Activated naive CD4-positive, alpha-beta T cell treated with anti-CD3 and anti-CD28 coated beads for 36 hours (primary cell): ENCODE measurements at regions of chr10 and their contacts with region 1.

Region 1: GRCh38 chr10:31318854-31319601 is at the start of gene ZEB1:
- DNase-seq: peak; percentile 96
- H3K4me3 Mint-ChIP-seq: peak within 1 kb of the TSS; percentile 98
- H3K27ac Mint-ChIP-seq: peak within 1 kb of the TSS; percentile 99
- H3K4me1 Mint-ChIP-seq: peaks cover 33% of the 10 kb centered on the region
- H3K27me3 Mint-ChIP-seq: no peaks in the 10 kb centered on the region
- total RNA-seq, gene ZEB1: 24.8 to 29.1 TPM

Region 2: DNA sequence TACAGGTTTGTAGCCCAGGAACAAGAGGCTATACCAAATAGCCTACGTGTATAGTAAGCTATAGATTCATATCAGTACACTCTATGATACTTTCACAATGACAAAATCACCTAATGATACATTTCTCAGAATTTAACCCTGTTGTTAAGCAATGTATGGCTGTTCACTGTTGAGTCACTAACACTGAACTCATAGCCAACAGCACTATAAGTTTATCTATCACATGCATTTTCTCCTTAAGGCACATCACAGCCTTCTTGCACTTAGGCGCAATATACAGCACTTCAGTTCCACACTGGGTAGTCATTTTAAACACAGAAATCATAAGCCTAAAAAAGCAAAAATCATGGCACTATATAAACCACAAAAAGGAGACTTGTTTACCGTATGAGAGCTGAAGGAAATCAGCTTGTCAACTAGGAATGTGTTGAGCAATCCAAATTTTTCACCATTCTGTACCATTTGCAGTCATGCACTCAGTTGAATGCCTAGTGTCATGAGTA is 332.9 kb before region 1 on chr10:
- CTCF ChIA-PET with region 1: no interaction called
- intact Hi-C with region 1: loop called (anchors 5 kb)
- DNase-seq: no peak
- H3K4me3 Mint-ChIP-seq: no peak overlapping the region
- H3K27ac Mint-ChIP-seq: peak overlapping the region; percentile 55
- H3K4me1 Mint-ChIP-seq: peaks cover 12% of the 10 kb centered on the region
- H3K27me3 Mint-ChIP-seq: no peaks in the 10 kb centered on the region

Region 3: GRCh38 chr10:31101123-31101522 is 217.9 kb before region 1 on chr10:
- CTCF ChIA-PET with region 1: no interaction called
- intact Hi-C with region 1: loop called (anchors 1 kb)
- DNase-seq: peak; percentile 91
- H3K4me3 Mint-ChIP-seq: peak overlapping the region; percentile 50
- H3K27ac Mint-ChIP-seq: peak overlapping the region; percentile 85
- H3K4me1 Mint-ChIP-seq: peaks cover 44% of the 10 kb centered on the region
- H3K27me3 Mint-ChIP-seq: no peaks in the 10 kb centered on the region

Region 4: DNA sequence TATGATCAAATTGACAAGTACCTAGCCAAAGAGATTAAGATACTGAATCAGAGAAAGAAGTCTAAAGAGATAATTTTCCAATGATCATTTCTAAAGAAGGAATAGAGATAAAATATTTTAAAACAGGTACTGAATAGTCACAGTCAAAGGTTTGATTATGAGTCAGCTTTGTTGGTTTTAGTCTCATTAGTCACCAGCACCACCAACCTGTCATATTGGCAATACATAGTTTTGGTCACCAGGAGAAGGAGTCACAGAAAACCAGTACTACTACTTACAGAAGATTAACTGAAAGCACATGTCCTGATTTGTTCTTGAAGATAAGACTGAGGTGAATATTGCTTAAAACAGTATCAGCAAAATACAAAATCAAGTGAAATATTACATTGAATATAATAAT is 34.5 kb after region 1 on chr10:
- CTCF ChIA-PET with region 1: no interaction called
- intact Hi-C with region 1: loop called (anchors 1 kb)
- DNase-seq: peak; percentile 40
- H3K4me3 Mint-ChIP-seq: no peak overlapping the region
- H3K27ac Mint-ChIP-seq: no peak overlapping the region
- H3K4me1 Mint-ChIP-seq: peaks cover 60% of the 10 kb centered on the region
- H3K27me3 Mint-ChIP-seq: no peaks in the 10 kb centered on the region

Region 5: DNA sequence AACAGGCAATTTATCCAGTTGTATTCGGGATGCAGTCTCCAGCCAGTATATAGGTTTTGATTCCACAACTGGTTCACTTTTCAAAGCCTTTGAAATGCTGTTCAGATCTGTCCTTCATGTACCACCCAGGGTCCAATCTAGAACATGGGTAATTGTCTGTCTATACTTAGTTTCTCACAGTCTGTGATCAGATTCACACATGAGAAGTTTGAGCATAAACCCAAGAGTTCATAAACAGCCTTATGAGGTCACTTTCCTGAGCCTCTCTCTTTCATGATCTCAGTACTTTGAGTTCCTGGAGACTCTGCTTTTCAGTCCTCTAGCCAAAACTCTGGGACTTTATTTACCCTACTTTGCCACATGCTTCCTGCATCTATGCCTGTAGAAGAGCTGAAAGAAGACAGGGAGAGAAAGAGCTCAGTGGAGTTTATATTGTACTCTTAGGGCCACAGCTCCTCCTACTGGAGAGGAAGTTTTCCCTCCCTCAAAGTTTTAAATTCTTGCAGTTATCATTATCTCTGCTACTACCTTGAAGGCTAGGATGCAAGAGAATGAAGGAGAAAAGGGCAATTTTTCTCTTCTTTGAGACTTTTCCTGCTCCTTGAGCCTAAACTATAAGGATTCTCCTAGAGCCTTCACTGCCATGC is 172.0 kb after region 1 on chr10:
- CTCF ChIA-PET with region 1: interaction called, 3 read pairs
- intact Hi-C with region 1: loop called (anchors 1 kb)
- DNase-seq: peak; percentile 27
- H3K4me3 Mint-ChIP-seq: no peak overlapping the region
- H3K27ac Mint-ChIP-seq: no peak overlapping the region
- H3K4me1 Mint-ChIP-seq: no peaks in the 10 kb centered on the region
- H3K27me3 Mint-ChIP-seq: no peaks in the 10 kb centered on the region

Region 6: GRCh38 chr10:31526681-31527080 is 207.7 kb after region 1 on chr10:
- CTCF ChIA-PET with region 1: no interaction called
- intact Hi-C with region 1: no loop called
- DNase-seq: no peak
- H3K4me3 Mint-ChIP-seq: no peak overlapping the region
- H3K27ac Mint-ChIP-seq: no peak overlapping the region
- H3K4me1 Mint-ChIP-seq: peaks cover 8% of the 10 kb centered on the region
- H3K27me3 Mint-ChIP-seq: no peaks in the 10 kb centered on the region

Region 7: GRCh38 chr10:31745612-31746376 is 426.8 kb after region 1 on chr10:
- CTCF ChIA-PET with region 1: no interaction called
- intact Hi-C with region 1: loop called (anchors 1 kb)
- DNase-seq: peak; percentile 84
- H3K4me3 Mint-ChIP-seq: no peak overlapping the region
- H3K27ac Mint-ChIP-seq: peak overlapping the region; percentile 95
- H3K4me1 Mint-ChIP-seq: peaks cover 47% of the 10 kb centered on the region
- H3K27me3 Mint-ChIP-seq: no peaks in the 10 kb centered on the region

Region 8: GRCh38 chr10:32378363-32379317 is 1059.6 kb after region 1 on chr10:
- CTCF ChIA-PET with region 1: no interaction called
- intact Hi-C with region 1: loop called (anchors 5 kb)
- DNase-seq: peak; percentile 97
- H3K4me3 Mint-ChIP-seq: no peak overlapping the region
- H3K27ac Mint-ChIP-seq: no peak overlapping the region
- H3K4me1 Mint-ChIP-seq: peaks cover 13% of the 10 kb centered on the region
- H3K27me3 Mint-ChIP-seq: no peaks in the 10 kb centered on the region